GM12878 (cell line): ENCODE measurements at regions of chr1 and their contacts with region 1.

Region 1: GRCh38 chr1:197180252-197180878 is 33.9 kb upstream of the ASPM start:
- DNase-seq: no peak
- ATAC-seq: peak; percentile 92
- H3K4me3 ChIP-seq: no peak overlapping the region
- H3K27ac ChIP-seq: no peak overlapping the region
- H3K4me1 ChIP-seq: peaks cover 16% of the 10 kb centered on the region
- H3K27me3 ChIP-seq: no peaks in the 10 kb centered on the region
- CTCF ChIP-seq: peak; percentile 52 to 67 (median 59)
- EP300 ChIP-seq: no peak
- POLR2A ChIP-seq: no peak
- RAD21 ChIP-seq: peak; percentile 88

Region 2: GRCh38 chr1:196980870-196981269 is 199.5 kb before region 1 on chr1:
- CTCF ChIA-PET with region 1: no interaction called
- POLR2A ChIA-PET with region 1: no interaction called
- RAD21 ChIA-PET with region 1: no interaction called
- SMC1A ChIA-PET with region 1: no interaction called
- in situ Hi-C with region 1: no loop called
- intact Hi-C with region 1: no loop called
- DNase-seq: no peak
- ATAC-seq: no peak
- H3K4me3 ChIP-seq: no peak overlapping the region
- H3K27ac ChIP-seq: no peak overlapping the region
- H3K4me1 ChIP-seq: no peaks in the 10 kb centered on the region
- H3K27me3 ChIP-seq: no peaks in the 10 kb centered on the region
- CTCF ChIP-seq: no peak
- EP300 ChIP-seq: no peak
- POLR2A ChIP-seq: no peak
- RAD21 ChIP-seq: no peak

Region 3: DNA sequence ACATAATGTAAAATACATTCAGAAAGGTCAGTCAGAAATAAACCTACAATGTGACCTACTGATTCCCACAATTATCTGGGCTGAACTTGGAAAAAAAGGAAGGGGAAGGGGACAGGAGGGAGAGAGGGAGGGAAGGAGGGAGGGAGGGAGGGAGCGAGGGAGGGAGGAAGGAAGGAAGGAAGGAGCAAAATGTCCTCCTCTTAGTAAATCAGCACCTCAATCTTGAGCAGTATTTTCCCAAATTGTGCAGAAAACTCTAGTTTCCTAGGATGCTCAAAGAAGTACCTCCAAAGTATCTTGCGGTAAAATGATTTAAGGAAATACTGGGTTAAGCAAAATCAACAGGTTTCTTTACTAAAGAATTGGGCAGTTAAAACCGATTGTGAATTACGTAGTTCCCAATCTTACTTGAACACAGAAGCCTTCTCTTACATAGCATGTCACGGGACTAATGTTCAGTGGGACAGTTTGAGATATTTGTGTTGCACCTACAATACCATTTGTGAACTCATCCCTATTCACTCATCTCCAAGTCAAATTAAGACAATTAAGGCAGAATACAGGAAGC is 17.1 kb after region 1 on chr1:
- CTCF ChIA-PET with region 1: interaction called, 4 read pairs
- POLR2A ChIA-PET with region 1: interaction called, 3 read pairs
- RAD21 ChIA-PET with region 1: no interaction called
- SMC1A ChIA-PET with region 1: interaction called, 5 read pairs
- in situ Hi-C with region 1: no loop called
- intact Hi-C with region 1: loop called (anchors 2 kb)
- DNase-seq: no peak
- ATAC-seq: no peak
- H3K4me3 ChIP-seq: peak overlapping the region; percentile 49; the same call in 1 of the 2 replicates
- H3K27ac ChIP-seq: no peak overlapping the region
- H3K4me1 ChIP-seq: no peaks in the 10 kb centered on the region; the same call in 1 of the 2 replicates
- H3K27me3 ChIP-seq: no peaks in the 10 kb centered on the region
- CTCF ChIP-seq: no peak
- EP300 ChIP-seq: no peak
- POLR2A ChIP-seq: no peak
- RAD21 ChIP-seq: no peak

Region 4: GRCh38 chr1:197327776-197328364 is 147.5 kb after region 1 on chr1:
- CTCF ChIA-PET with region 1: interaction called, 35 read pairs
- POLR2A ChIA-PET with region 1: no interaction called
- RAD21 ChIA-PET with region 1: interaction called, 10 read pairs
- SMC1A ChIA-PET with region 1: interaction called, 8 read pairs
- in situ Hi-C with region 1: no loop called
- intact Hi-C with region 1: no loop called
- DNase-seq: no peak
- ATAC-seq: peak; percentile 53; the same call in 2 of the 3 replicates
- H3K4me3 ChIP-seq: no peak overlapping the region
- H3K27ac ChIP-seq: no peak overlapping the region
- H3K4me1 ChIP-seq: no peaks in the 10 kb centered on the region
- H3K27me3 ChIP-seq: no peaks in the 10 kb centered on the region
- CTCF ChIP-seq: peak; percentile 38 to 52 (median 39); a peak in 5 of 6 replicates
- EP300 ChIP-seq: no peak
- POLR2A ChIP-seq: no peak
- RAD21 ChIP-seq: peak; percentile 41; the same call in 1 of the 2 replicates

Region 5: GRCh38 chr1:197343663-197344273 is 163.4 kb after region 1 on chr1:
- CTCF ChIA-PET with region 1: interaction called, 14 read pairs
- POLR2A ChIA-PET with region 1: no interaction called
- RAD21 ChIA-PET with region 1: interaction called, 5 read pairs
- SMC1A ChIA-PET with region 1: interaction called, 5 read pairs
- in situ Hi-C with region 1: no loop called
- intact Hi-C with region 1: no loop called
- DNase-seq: no peak
- ATAC-seq: no peak
- H3K4me3 ChIP-seq: no peak overlapping the region
- H3K27ac ChIP-seq: no peak overlapping the region
- H3K4me1 ChIP-seq: no peaks in the 10 kb centered on the region
- H3K27me3 ChIP-seq: no peaks in the 10 kb centered on the region
- CTCF ChIP-seq: no peak
- EP300 ChIP-seq: no peak
- POLR2A ChIP-seq: no peak
- RAD21 ChIP-seq: no peak

Region 6: DNA sequence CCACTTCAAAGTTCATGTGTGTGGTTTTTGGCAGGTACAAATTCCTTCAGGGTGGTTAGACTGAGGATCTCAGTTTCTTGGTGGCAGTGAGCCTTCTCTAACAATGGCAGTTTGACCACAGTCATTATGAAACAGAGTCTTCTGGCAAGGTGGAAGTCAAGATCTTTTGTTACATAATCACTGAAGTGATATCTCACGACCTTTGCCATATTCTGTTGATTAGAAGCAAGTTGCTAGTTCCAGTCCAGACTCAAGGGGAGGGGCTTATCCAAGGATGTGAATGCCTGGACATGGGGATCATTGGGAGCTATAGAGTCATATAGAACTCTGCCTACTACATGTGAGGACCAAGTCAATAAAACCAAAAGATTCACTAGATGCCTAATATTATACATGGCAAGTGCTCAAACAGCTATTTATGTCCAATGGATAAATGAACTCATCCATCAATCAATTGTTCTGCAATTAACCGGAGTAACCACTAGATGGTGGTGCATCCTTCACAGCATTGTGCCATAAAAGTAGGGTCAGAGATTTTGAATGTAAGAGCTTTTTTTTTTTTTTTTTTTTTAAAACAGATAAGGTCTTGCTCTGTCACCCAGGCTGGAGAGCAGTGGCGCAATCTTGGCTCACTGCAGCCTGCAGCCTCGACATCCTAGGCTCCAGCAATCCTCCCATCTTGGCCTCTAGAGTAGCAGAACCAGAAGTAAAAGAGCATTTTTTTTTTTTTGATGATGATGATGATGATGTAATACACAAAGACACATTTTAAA is 219.6 kb after region 1 on chr1:
- CTCF ChIA-PET with region 1: interaction called, 4 read pairs
- POLR2A ChIA-PET with region 1: no interaction called
- RAD21 ChIA-PET with region 1: no interaction called
- SMC1A ChIA-PET with region 1: no interaction called
- in situ Hi-C with region 1: no loop called
- intact Hi-C with region 1: loop called (anchors 1 kb)
- DNase-seq: peak; percentile 11
- ATAC-seq: peak; percentile 81
- H3K4me3 ChIP-seq: no peak overlapping the region
- H3K27ac ChIP-seq: no peak overlapping the region
- H3K4me1 ChIP-seq: no peaks in the 10 kb centered on the region
- H3K27me3 ChIP-seq: no peaks in the 10 kb centered on the region
- CTCF ChIP-seq: peak; percentile 50 to 64 (median 62)
- EP300 ChIP-seq: no peak
- POLR2A ChIP-seq: no peak
- RAD21 ChIP-seq: peak; percentile 57